Ascending aorta (tissue), 2 donors: ENCODE measurements at regions of chr11 and their contacts with region 1.

Region 1: DNA sequence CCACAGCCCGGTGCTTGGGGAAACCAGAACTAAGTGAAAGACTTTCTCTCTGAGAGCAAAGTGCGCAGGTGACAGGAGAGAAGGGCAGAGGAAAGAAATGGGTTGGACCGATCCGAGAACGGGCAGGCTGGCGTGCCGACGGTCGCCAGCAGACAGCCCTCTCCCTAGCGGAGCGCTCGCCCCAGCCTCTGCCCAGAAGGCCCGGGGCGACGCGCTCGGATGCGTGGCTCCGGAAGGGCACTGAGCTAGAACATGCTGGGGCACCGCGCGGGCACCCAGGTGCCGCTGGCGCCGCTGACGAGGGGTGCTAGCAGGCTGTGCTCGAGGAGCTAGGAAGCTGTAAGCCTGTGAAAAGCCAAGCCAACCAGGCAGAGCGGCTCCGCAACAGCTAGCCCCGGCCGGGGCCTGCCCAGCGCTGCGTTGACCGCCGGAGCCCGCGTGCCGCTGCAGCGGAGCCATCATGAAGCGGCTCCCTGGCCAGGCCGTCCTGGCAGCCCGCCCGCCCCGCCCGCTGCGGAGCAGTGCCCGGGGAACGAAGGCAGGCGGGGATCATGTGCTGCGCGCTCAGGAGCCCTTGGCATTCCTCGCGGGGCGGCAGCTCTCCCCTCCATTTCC is 22.1 kb upstream of the RRAS2 start:
- DNase-seq: peak; percentile 45 to 91
- H3K4me3 ChIP-seq: peak overlapping the region; percentile 60 to 81
- H3K27ac ChIP-seq: peak overlapping the region; percentile 79 to 94
- H3K4me1 ChIP-seq: peaks cover 6 to 22% of the 10 kb centered on the region in 2 donors
- H3K27me3 ChIP-seq: no peaks in the 10 kb centered on the region
- CTCF ChIP-seq: no peak

Region 2: GRCh38 chr11:14189874-14190273 is 191.2 kb before region 1 on chr11:
- intact Hi-C with region 1: no loop called
- DNase-seq: peak; percentile 37 to 86
- H3K4me3 ChIP-seq: peak overlapping the region in 1 of 2 donors; percentile 19
- H3K27ac ChIP-seq: peak overlapping the region; percentile 16 to 74
- H3K4me1 ChIP-seq: peaks cover 6 to 15% of the 10 kb centered on the region in 2 donors
- H3K27me3 ChIP-seq: no peaks in the 10 kb centered on the region
- CTCF ChIP-seq: no peak

Region 3: DNA sequence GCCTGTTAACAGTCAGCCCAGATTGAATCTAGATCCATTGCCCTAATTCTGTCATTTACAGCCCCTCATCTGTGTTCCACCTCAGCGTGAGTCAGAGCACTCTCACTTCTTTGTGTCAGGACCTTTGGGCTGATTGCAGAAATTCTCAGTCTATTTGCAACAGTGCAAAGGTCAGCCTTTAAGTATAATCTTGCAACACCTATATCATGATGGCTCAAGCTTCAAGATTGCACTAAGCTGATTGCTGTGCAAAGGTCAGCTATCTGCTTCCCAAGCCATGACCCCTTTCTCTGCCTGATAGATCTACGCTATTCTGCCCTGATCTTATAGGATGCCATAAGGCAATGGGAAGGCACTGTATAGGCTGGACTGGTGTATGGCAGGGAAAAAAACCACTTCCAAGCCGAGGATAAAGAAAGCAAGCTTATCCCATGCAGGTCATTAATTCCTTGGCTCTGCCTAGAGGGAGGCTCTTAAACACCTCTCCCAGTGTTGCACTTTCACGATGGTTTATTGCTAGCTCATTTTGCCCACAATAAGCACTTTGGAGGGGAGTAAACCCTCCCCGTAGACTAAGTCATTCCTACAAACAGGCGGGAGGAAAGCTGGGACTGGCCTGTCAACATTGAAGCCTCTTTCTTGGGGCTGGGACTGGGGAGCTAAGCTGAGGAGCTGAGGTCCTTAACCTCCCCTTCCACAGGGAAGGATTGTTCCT is 122.7 kb before region 1 on chr11:
- intact Hi-C with region 1: no loop called
- DNase-seq: no peak
- H3K4me3 ChIP-seq: no peak overlapping the region
- H3K27ac ChIP-seq: no peak overlapping the region
- H3K4me1 ChIP-seq: no peaks in the 10 kb centered on the region
- H3K27me3 ChIP-seq: no peaks in the 10 kb centered on the region
- CTCF ChIP-seq: no peak

Region 4: GRCh38 chr11:14422052-14422813 is 41.2 kb after region 1 on chr11:
- intact Hi-C with region 1: loop called (anchors 2 kb)
- DNase-seq: peak; percentile 71 to 95
- H3K4me3 ChIP-seq: no peak overlapping the region
- H3K27ac ChIP-seq: peak overlapping the region; percentile 57 to 60
- H3K4me1 ChIP-seq: peaks cover 6 to 26% of the 10 kb centered on the region in 2 donors
- H3K27me3 ChIP-seq: no peaks in the 10 kb centered on the region
- CTCF ChIP-seq: no peak

Region 5: DNA sequence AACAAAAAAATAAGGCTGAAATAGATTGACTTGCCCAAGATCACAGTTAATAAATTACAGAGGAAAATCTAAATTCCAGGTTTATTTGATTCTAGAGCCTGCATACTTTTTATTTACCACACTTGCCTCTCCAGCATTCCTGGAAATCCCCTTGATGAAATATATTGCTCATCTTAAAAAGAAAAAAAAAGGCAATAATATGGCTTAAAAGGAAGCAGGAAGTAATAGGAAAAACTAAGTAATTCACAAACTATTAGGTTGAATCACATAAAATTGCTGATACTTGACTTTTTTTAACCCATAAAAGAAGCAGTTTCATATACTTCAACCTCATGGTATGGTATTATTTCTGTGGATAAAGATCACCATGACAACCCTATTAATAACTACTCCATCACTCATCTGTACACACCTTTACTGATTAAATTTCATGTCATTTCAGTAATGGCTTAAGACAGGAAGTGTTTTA is 65.7 kb after region 1 on chr11:
- intact Hi-C with region 1: loop called (anchors 5 kb)
- DNase-seq: no peak
- H3K4me3 ChIP-seq: no peak overlapping the region
- H3K27ac ChIP-seq: no peak overlapping the region
- H3K4me1 ChIP-seq: peaks cover 0 to 11% of the 10 kb centered on the region in 2 donors
- H3K27me3 ChIP-seq: no peaks in the 10 kb centered on the region
- CTCF ChIP-seq: no peak